Activated CD4-positive, alpha-beta T cell treated with anti-CD3 and anti-CD28 coated beads, Interleukin-2, amount 10 ng/mL, durations not matched to agents 7 days and 5 days (primary cell): ENCODE measurements at regions of chr2 and their contacts with region 1.

Region 1: DNA sequence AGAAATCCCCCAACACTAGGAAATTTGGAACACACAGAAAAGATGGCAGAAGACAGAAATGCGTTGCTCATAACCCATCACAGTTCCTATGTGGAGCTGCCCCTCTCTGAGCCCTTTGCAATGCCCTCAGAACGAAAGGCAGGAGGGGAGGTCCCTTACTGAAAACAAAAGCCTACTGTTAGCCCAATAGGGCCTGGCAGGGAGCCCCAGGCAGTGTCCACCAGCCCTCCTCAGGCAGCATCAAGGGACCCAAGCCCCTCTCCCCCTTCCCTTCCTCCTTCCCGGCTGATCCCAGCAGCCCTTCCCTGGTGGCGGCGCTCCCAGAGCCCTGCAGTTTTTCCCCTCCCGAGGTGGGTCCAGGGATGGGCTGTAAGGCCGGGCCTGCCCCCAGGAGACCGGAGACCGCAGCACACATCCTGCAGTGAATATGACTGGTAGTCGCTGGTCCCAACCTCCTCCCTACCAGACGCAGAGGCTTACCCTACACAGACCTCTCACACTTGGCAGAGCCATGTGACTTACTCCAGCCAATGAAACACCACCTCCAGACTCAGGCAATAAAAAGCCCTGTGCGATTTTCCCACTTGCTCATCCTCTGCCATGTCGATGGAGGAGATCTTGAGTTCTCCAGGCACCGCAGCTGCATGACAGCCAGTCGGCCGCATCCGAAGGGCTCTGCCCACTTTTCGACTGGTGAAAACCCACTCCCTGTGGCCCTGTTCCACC is 19.4 kb upstream of the DUSP2 start:
- DNase-seq: peak; percentile 67
- H3K4me3 Mint-ChIP-seq: peak overlapping the region; percentile 50
- H3K27ac Mint-ChIP-seq: peak overlapping the region; percentile 95
- H3K4me1 Mint-ChIP-seq: peaks cover 48% of the 10 kb centered on the region
- H3K27me3 Mint-ChIP-seq: no peaks in the 10 kb centered on the region

Region 2: GRCh38 chr2:96131152-96131812 is 33.3 kb before region 1 on chr2:
- CTCF ChIA-PET with region 1: no interaction called
- POLR2A ChIA-PET with region 1: no interaction called
- DNase-seq: no peak
- H3K4me3 Mint-ChIP-seq: no peak overlapping the region
- H3K27ac Mint-ChIP-seq: peak overlapping the region; percentile 47
- H3K4me1 Mint-ChIP-seq: peaks cover 21% of the 10 kb centered on the region
- H3K27me3 Mint-ChIP-seq: no peaks in the 10 kb centered on the region

Region 3: GRCh38 chr2:96145036-96145847 is 19.4 kb before region 1 on chr2 and contains the start of gene DUSP2:
- CTCF ChIA-PET with region 1: interaction called, 10 read pairs
- POLR2A ChIA-PET with region 1: no interaction called
- DNase-seq: peak; percentile 88
- H3K4me3 Mint-ChIP-seq: peak within 1 kb of the TSS; percentile 92
- H3K27ac Mint-ChIP-seq: peak within 1 kb of the TSS; percentile 98
- H3K4me1 Mint-ChIP-seq: peaks cover 67% of the 10 kb centered on the region
- H3K27me3 Mint-ChIP-seq: no peaks in the 10 kb centered on the region
- total RNA-seq, gene DUSP2: 11.9 to 14.2 TPM